HEK293 (cell line): ENCODE measurements at regions of chr12 and their contacts with region 1.

Region 1: DNA sequence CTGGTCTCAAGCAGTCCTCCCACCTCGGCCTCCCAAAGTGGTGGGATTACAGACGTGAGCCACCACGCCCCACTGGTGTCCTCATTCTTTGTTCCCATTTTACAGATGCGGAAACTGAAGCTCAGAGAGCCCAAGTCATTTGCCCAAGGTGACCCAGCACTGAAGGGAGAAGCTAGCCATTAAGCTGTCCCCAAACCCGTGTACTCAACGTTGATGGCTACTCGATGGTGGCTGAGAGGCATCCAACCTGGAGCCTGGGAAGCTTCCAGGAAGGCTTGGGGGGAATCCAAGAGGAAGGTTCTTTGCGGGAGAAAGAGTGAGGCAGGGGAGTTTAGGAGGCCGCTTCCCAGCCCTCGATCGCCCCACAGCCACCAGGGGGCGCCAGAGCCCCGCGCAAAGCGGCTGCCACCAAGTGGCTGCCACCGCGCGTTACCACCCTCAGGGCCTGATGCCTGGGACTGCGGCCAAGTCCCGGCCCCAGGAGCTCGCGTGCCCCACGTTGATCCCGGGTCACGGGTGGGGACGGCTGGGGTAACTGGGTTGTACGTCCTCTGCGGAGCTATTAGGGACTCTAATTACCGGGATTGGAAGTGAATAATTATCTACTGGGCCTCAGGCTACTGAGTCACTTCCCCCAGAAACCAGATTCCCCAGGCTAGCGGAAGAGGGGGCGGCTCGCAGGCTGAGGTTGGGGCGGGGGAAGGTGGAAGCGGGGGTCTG is 8.8 kb upstream of the SH2B3 start:
- H3K4me3 ChIP-seq: peak overlapping the region; percentile 21
- H3K27ac ChIP-seq: no peak overlapping the region
- H3K4me1 ChIP-seq: no peaks in the 10 kb centered on the region
- CTCF ChIP-seq: peak; percentile 99

Region 2: GRCh38 chr12:111313833-111314259 is 83.0 kb before region 1 on chr12:
- CTCF ChIA-PET with region 1: no interaction called
- POLR2A ChIA-PET with region 1: no interaction called
- H3K4me3 ChIP-seq: no peak overlapping the region
- H3K27ac ChIP-seq: no peak overlapping the region
- H3K4me1 ChIP-seq: no peaks in the 10 kb centered on the region
- CTCF ChIP-seq: peak; percentile 81

Region 3: GRCh38 chr12:111368788-111369495 is 27.9 kb before region 1 on chr12 and contains the start of gene PHETA1:
- CTCF ChIA-PET with region 1: interaction called, 14 read pairs
- POLR2A ChIA-PET with region 1: interaction called, 4 read pairs
- H3K4me3 ChIP-seq: peak within 1 kb of the TSS; percentile 69
- H3K27ac ChIP-seq: no peak within 1 kb of the TSS; the same call in 1 of the 2 replicates
- H3K4me1 ChIP-seq: no peaks in the 10 kb centered on the region; the same call in 1 of the 2 replicates
- CTCF ChIP-seq: no peak

Region 4: DNA sequence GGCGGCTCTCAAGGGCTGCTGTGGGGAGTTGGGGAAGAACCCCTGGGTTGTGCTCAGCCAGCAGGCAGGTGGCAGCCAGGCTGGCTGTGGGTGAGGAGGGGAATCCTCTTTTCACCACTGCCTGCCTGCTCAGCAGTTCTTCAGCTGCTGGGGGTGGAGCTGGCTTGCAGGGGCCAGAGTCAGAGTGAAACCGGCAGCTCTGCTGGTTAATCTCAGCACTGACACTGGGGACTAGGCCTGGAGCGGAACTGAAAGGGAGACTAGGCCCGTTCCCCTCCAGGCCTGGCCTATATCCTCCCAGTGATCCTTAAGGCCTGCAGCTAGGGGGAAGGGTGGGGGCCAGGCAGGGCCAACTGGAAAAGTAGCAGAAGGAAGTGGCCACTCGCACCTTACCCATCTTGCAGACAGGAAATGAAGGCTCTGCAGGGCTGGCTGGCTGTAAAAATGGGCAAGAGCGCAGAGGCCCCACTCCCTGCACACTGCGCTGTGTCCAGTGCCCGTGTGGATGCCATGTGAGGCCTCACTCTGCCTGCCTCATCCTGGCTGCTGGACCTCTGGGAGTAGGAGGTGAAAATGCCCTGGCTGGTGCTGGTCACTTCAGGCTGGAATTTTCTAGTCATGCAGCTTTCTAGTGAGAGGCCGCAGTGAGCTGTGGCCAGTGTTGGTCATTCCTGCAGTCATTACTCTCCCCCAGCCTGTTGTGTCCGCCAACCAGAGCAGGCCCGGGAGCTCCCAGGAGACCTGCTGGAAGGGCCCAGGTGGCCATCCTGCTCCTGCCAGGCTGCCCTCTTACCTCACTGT is 48.2 kb after region 1 on chr12:
- CTCF ChIA-PET with region 1: interaction called, 217 read pairs
- POLR2A ChIA-PET with region 1: no interaction called
- H3K4me3 ChIP-seq: no peak overlapping the region
- H3K27ac ChIP-seq: no peak overlapping the region
- H3K4me1 ChIP-seq: peaks cover 3% of the 10 kb centered on the region; the same call in 1 of the 2 replicates
- CTCF ChIP-seq: no peak

Region 5: DNA sequence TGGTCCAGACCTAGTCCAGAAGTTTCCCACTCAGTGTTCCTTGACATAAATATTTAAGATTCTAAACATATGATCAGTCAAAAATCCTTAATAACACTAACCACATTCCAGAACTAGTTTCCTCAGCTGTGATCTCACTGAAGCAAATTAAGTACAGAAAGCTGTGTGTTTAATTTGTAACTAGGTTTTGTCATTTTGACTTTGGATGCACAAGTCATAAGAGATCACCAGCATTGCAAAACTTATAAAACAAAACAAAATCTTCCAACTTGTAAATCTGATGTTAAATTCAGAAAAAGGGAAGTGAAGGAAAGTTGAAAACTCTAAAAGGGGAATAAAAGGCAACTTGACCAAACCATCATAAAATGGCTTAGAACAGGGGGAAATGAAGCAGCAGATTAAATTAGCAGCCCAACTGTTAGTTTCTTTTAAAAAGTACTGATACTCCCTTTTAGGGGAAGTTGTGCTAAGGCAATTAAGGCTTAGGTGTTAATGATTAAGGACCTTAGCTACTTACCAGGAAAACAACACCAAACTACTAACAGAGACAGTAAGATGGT is 65.4 kb after region 1 on chr12:
- CTCF ChIA-PET with region 1: interaction called, 15 read pairs
- POLR2A ChIA-PET with region 1: no interaction called
- H3K4me3 ChIP-seq: no peak overlapping the region
- H3K27ac ChIP-seq: no peak overlapping the region
- H3K4me1 ChIP-seq: no peaks in the 10 kb centered on the region
- CTCF ChIP-seq: no peak

Region 6: GRCh38 chr12:111529424-111530368 is 132.8 kb after region 1 on chr12:
- CTCF ChIA-PET with region 1: interaction called, 44 read pairs
- POLR2A ChIA-PET with region 1: no interaction called
- H3K4me3 ChIP-seq: no peak overlapping the region
- H3K27ac ChIP-seq: no peak overlapping the region
- H3K4me1 ChIP-seq: no peaks in the 10 kb centered on the region
- CTCF ChIP-seq: no peak